Sciatic nerve (tissue), 2 donors: ENCODE measurements at regions of chr2 and their contacts with region 1.

Region 1: GRCh38 chr2:48727565-48727964 is 28.0 kb downstream of the LHCGR start:
- DNase-seq: no peak
- ATAC-seq: peak; percentile 57

Region 2: DNA sequence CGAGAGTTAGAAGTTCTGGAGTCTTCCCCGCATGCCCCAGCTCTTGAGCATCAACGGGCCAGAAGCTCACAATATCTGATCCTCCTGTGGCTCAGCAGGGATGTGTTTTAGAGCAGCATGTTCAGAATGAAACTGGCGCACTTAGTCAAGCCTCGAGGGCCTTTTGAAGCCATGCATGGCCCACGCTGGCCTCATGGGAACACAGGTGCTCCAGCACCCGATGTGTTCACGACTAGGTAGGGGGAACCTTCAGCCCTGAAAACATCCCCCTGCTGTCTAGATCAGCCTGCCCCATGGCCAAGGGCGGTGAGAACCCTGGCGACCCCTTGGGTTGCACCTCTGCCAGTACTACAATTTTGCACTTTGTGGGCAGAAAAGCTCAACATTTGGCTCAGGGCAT is 911.8 kb before region 1 on chr2:
- intact Hi-C with region 1: no loop called
- DNase-seq: no peak
- ATAC-seq: peak; percentile 26

Region 3: DNA sequence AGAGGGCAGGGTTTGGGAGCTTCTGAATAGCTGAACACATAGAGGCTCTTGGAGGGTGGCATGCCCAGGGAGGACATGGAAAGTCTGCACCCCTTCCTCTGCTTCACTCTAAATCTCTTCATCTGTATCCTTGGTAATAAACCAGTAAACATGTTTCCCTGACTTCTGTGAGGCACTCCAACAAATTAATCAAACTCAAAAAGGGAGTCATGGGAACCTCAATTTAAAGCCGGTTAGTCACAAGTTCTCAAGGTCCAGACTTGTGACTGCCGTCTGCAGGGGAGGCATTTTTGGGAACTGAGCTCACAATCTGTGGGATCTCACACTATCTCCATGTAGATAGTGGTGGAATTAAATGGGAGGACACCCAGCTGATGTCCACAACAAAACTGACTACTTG is 230.7 kb before region 1 on chr2:
- intact Hi-C with region 1: no loop called
- DNase-seq: no peak
- ATAC-seq: no peak

Region 4: DNA sequence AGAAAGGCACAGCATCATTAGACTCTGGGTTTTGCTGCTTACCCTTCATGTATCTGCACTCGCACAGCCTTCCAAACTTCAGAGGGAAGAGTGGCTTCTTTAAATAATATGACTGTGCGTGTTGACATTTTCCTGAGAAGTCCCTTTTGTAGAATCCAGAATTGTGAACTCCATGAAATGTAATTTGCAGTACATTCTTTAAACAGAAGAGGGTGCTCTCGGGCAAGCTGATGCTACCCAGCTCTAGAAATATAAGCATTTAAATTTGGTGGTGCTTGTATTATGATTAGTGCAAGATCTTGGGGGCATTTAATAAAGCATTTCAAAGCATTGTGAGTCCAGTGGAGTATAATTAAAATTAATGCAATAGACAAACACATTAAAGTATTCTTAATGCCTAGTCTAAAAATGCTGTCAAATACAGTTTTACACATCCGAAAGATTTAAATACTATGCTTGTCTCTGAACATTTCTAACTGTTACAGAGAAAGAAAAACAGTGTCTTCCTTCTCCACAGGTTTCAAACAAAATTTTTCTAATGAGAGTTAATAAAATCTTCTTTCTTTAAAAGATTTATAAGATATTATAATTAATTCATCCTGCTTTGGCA is 127.3 kb before region 1 on chr2:
- intact Hi-C with region 1: loop called (anchors 5 kb)
- DNase-seq: no peak
- ATAC-seq: peak; percentile 55

Region 5: GRCh38 chr2:48685126-48685525 is 42.4 kb before region 1 on chr2:
- intact Hi-C with region 1: no loop called
- DNase-seq: no peak
- ATAC-seq: no peak

Region 6: GRCh38 chr2:48695991-48696390 is 31.6 kb before region 1 on chr2:
- intact Hi-C with region 1: no loop called
- DNase-seq: no peak
- ATAC-seq: no peak